HEK293 (cell line): ENCODE measurements at regions of chr7 and their contacts with region 1.

Region 1: GRCh38 chr7:137626469-137627067 is 220.2 kb downstream of the DGKI start:
- H3K4me3 ChIP-seq: no peak overlapping the region
- H3K27ac ChIP-seq: no peak overlapping the region
- H3K4me1 ChIP-seq: no peaks in the 10 kb centered on the region
- CTCF ChIP-seq: no peak

Region 2: DNA sequence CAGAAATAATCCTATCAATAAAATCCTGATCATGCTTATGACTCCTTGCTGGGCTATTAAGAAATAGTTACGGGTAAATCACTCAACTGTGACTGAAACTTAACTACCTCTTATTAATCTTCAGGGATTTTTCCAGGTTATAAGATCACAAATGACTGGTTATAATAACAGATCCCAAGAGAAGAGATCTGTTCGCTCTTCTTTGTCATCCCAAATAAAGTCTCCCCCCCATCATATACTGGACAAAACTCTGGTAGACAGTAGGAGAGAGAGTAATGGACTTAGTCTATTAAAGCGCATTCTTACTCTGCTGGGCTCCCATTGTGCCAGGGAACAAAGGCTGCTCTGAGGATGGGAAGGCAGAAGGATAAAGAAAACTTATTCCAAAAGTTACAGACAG is 13.6 kb before region 1 on chr7:
- CTCF ChIA-PET with region 1: interaction called, 29 read pairs
- POLR2A ChIA-PET with region 1: no interaction called
- H3K4me3 ChIP-seq: no peak overlapping the region
- H3K27ac ChIP-seq: no peak overlapping the region
- H3K4me1 ChIP-seq: no peaks in the 10 kb centered on the region
- CTCF ChIP-seq: no peak